Activated T-helper 2 cell treated with anti-CD3 and anti-CD28 coated beads, Interferon-gamma antibody, Interleukin-2, Interleukin-4, amounts not matched to agents 10 μg/mL and 5 μg/mL and 100 μg/mL, durations not matched to agents 14 hours and 24 hours and 36 hours (primary cell): ENCODE measurements at regions of chr2 and their contacts with region 1.

Region 1: GRCh38 chr2:36785179-36785795 is 88.8 kb downstream of the VIT start:
- DNase-seq: peak; percentile 63
- H3K4me3 Mint-ChIP-seq: no peak overlapping the region
- H3K27ac Mint-ChIP-seq: no peak overlapping the region
- H3K4me1 Mint-ChIP-seq: peaks cover 3% of the 10 kb centered on the region
- H3K27me3 Mint-ChIP-seq: peaks cover 26% of the 10 kb centered on the region

Region 2: GRCh38 chr2:36886664-36887063 is 101.4 kb after region 1 on chr2:
- intact Hi-C with region 1: no loop called
- DNase-seq: no peak
- H3K4me3 Mint-ChIP-seq: no peak overlapping the region
- H3K27ac Mint-ChIP-seq: no peak overlapping the region
- H3K4me1 Mint-ChIP-seq: peaks cover 5% of the 10 kb centered on the region
- H3K27me3 Mint-ChIP-seq: no peaks in the 10 kb centered on the region

Region 3: GRCh38 chr2:36918307-36918706 is 133.0 kb after region 1 on chr2:
- intact Hi-C with region 1: loop called (anchors 5 kb)
- DNase-seq: no peak
- H3K4me3 Mint-ChIP-seq: no peak overlapping the region
- H3K27ac Mint-ChIP-seq: no peak overlapping the region
- H3K4me1 Mint-ChIP-seq: peaks cover 18% of the 10 kb centered on the region
- H3K27me3 Mint-ChIP-seq: no peaks in the 10 kb centered on the region

Region 4: GRCh38 chr2:37005118-37005868 is 220.0 kb after region 1 on chr2:
- intact Hi-C with region 1: loop called (anchors 2 kb)
- DNase-seq: peak; percentile 11
- H3K4me3 Mint-ChIP-seq: peak overlapping the region; percentile 7
- H3K27ac Mint-ChIP-seq: peak overlapping the region; percentile 10
- H3K4me1 Mint-ChIP-seq: peaks cover 11% of the 10 kb centered on the region
- H3K27me3 Mint-ChIP-seq: no peaks in the 10 kb centered on the region

Region 5: GRCh38 chr2:37083873-37084794 is 298.8 kb after region 1 on chr2 and contains the starts of genes GPATCH11 and HEATR5B:
- intact Hi-C with region 1: loop called (anchors 5 kb)
- DNase-seq: peak; percentile 90
- H3K4me3 Mint-ChIP-seq: no peak within 1 kb of the TSS
- H3K27ac Mint-ChIP-seq: no peak within 1 kb of the TSS
- H3K4me1 Mint-ChIP-seq: peaks cover 35% of the 10 kb centered on the region
- H3K27me3 Mint-ChIP-seq: no peaks in the 10 kb centered on the region
- total RNA-seq, gene GPATCH11: 14.4 and 14.9 TPM in 2 replicates
- total RNA-seq, gene HEATR5B: 15.3 and 16.8 TPM in 2 replicates